ENCODE measurements at regions of chr1 and their contacts with region 1.

Region 1: GRCh38 chr1:145906954-145907753 is 2.7 kb downstream of the ITGA10 start:
- DNase-seq: no peak
- ATAC-seq: no peak
- H3K4me3 ChIP-seq: no peak overlapping the region
- H3K4me3 Mint-ChIP-seq: no peak overlapping the region
- H3K27ac ChIP-seq: no peak overlapping the region
- H3K27ac Mint-ChIP-seq: no peak overlapping the region
- H3K4me1 ChIP-seq: peaks cover 0 to 3% of the 10 kb centered on the region in 2 experiments
- H3K4me1 Mint-ChIP-seq: peaks cover 5 to 8% (median 6%) of the 10 kb centered on the region in 3 donors
- H3K27me3 ChIP-seq: no peaks in the 10 kb centered on the region
- H3K27me3 Mint-ChIP-seq: no peaks in the 10 kb centered on the region

Region 2: DNA sequence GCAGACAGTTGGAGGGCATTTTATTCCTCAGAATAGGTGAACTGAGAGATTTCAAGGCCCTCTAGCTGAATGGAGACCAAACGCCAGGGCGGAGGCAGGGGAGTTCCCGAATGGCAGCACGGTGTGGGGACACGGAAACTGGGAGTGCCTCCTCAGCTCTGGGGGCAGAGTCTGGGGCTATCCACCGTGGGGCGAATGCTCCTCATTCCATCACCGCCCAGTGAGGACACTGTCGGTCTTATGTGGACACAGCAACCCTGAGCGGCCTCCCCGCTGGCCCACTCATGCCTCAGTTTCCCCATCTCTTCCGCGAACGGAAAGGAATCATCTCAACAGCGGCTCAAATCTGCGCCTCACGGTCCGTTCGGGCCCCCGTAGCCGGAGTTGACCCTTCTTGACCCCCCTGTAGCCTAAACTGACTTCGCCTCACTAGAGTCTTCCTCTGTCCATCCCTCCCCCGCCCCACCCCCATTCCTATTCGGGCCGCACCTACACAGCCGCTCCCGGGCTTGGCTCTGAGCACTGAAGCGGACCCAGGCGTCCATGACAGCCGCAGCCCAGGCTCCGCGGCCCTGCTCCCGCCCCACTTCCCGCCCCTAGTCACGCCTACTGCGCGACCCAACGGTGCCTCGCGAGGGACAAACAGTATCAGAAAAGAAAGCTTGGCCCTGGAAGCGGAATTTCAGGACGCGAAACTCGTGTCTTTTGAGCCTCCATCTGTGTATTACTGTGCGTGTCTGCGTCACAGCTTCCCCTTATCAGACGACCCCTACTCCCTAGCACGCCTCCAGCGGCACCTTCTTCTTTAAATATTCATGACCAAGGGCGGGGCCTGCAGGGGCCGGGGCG is 11.2 kb after region 1 on chr1 and contains the start of gene PEX11B:
- CTCF ChIA-PET with region 1: interaction called, 3 to 4 read pairs
- POLR2A ChIA-PET with region 1: interaction called, 3 to 12 read pairs
- DNase-seq: peak; percentile 86 to 96 (median 92)
- ATAC-seq: peak; percentile 89 to 95 (median 94)
- H3K4me3 ChIP-seq: peak within 1 kb of the TSS; percentile 93 to 98
- H3K4me3 Mint-ChIP-seq: peak within 1 kb of the TSS; percentile 82 to 94 (median 91)
- H3K27ac ChIP-seq: peak within 1 kb of the TSS; percentile 67
- H3K27ac Mint-ChIP-seq: peak within 1 kb of the TSS; percentile 95 to 98
- H3K4me1 ChIP-seq: peaks cover 17 to 29% of the 10 kb centered on the region in 2 experiments
- H3K4me1 Mint-ChIP-seq: peaks cover 49 to 57% (median 52%) of the 10 kb centered on the region in 3 donors
- H3K27me3 ChIP-seq: no peaks in the 10 kb centered on the region
- H3K27me3 Mint-ChIP-seq: no peaks in the 10 kb centered on the region
- total RNA-seq, gene PEX11B: 18.8 to 36.3 (median 34.4) TPM

Region 3: GRCh38 chr1:145988768-145989167 is 81.6 kb after region 1 on chr1:
- CTCF ChIA-PET with region 1: no interaction called
- POLR2A ChIA-PET with region 1: interaction called in 1 of 2 experiments, 10 read pairs
- DNase-seq: peak in 1 of 35 experiments; percentile 54
- ATAC-seq: peak; percentile 66 to 78 (median 68)
- H3K4me3 ChIP-seq: no peak overlapping the region
- H3K4me3 Mint-ChIP-seq: peak overlapping the region in 1 of 3 donors; percentile 65
- H3K27ac ChIP-seq: no peak overlapping the region
- H3K27ac Mint-ChIP-seq: peak overlapping the region; percentile 77 to 87
- H3K4me1 ChIP-seq: peaks cover 34 to 62% of the 10 kb centered on the region in 2 experiments
- H3K4me1 Mint-ChIP-seq: peaks cover 73 to 85% (median 80%) of the 10 kb centered on the region in 3 donors
- H3K27me3 ChIP-seq: no peaks in the 10 kb centered on the region
- H3K27me3 Mint-ChIP-seq: no peaks in the 10 kb centered on the region

Measured in T-cell (primary cell).